Caco-2 (cell line): ENCODE measurements at regions of chr9 and their contacts with region 1.

Region 1: DNA sequence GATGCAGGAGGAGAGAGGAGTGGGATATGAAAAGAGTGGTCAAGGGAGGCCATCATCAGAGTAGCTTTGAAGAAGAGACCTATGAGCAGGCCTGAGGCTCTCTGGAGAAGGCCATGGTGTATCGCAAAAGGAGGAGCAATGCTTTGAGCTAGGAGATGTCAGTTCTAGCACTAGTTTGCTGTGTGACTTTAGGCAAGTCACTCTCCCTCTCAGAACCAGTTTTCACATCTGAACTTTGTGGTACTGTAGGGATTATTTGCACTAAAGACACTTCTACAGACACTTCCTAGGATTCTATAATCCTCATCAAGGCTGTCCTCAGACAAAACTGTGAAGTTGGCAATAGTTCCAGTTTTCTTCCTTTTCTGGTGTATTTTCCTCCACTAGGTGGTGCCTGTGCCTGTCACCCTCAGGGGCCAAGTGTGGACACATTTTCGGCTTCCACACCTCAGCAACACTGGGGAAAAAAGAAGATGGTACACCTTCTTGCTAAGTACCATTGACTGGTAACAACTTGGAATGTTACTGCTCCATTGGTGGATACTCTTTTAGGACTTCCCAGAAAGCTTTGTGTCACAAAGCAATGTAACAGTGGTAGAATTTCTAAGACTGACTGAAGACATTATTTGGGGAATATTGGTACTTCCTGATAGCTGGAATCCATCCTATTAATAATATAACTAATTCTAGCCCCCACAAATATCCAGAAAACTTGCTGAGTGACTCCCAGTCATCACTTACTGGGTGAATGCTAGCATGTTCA is 9.9 kb downstream of the PAPPA start:
- DNase-seq: peak in 1 of 2 experiments; percentile 17
- H3K4me3 ChIP-seq: no peak overlapping the region
- H3K4me3 Mint-ChIP-seq: no peak overlapping the region
- H3K27ac Mint-ChIP-seq: no peak overlapping the region
- H3K4me1 ChIP-seq: no peaks in the 10 kb centered on the region
- H3K4me1 Mint-ChIP-seq: no peaks in the 10 kb centered on the region
- H3K27me3 ChIP-seq: no peaks in the 10 kb centered on the region
- H3K27me3 Mint-ChIP-seq: peaks cover 16% of the 10 kb centered on the region
- CTCF ChIP-seq: peak; percentile 54 to 64

Region 2: GRCh38 chr9:115694014-115694413 is 469.5 kb before region 1 on chr9:
- CTCF ChIA-PET with region 1: no interaction called
- POLR2A ChIA-PET with region 1: no interaction called
- intact Hi-C with region 1: loop called (anchors 5 kb)
- DNase-seq: peak; percentile 36 to 38
- H3K4me3 ChIP-seq: no peak overlapping the region
- H3K4me3 Mint-ChIP-seq: no peak overlapping the region
- H3K27ac Mint-ChIP-seq: no peak overlapping the region
- H3K4me1 ChIP-seq: no peaks in the 10 kb centered on the region
- H3K4me1 Mint-ChIP-seq: no peaks in the 10 kb centered on the region
- H3K27me3 ChIP-seq: no peaks in the 10 kb centered on the region
- H3K27me3 Mint-ChIP-seq: peaks cover 13% of the 10 kb centered on the region
- CTCF ChIP-seq: no peak

Region 3: DNA sequence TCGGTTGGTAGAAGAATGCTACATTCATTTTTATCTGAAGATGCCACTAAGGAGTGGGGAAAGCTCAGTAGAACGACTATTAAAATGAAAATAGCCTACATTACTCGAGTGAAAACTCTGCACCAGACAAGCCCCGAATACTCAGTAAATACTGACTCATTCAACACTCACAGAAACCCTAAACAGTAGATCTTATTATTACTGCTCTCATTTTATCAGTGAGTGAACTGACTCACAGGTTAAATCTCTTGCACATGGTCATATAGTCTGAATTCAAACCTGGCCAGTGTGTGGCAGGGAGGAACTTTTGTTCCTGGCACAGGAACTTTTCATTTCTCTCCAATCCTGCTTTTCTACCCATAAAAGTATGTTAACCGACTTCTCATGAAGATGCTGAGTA is 19.4 kb before region 1 on chr9:
- CTCF ChIA-PET with region 1: no interaction called
- POLR2A ChIA-PET with region 1: no interaction called
- intact Hi-C with region 1: no loop called
- DNase-seq: no peak
- H3K4me3 ChIP-seq: no peak overlapping the region
- H3K4me3 Mint-ChIP-seq: no peak overlapping the region
- H3K27ac Mint-ChIP-seq: no peak overlapping the region
- H3K4me1 ChIP-seq: no peaks in the 10 kb centered on the region
- H3K4me1 Mint-ChIP-seq: no peaks in the 10 kb centered on the region
- H3K27me3 ChIP-seq: no peaks in the 10 kb centered on the region
- H3K27me3 Mint-ChIP-seq: peaks cover 18% of the 10 kb centered on the region
- CTCF ChIP-seq: no peak

Region 4: DNA sequence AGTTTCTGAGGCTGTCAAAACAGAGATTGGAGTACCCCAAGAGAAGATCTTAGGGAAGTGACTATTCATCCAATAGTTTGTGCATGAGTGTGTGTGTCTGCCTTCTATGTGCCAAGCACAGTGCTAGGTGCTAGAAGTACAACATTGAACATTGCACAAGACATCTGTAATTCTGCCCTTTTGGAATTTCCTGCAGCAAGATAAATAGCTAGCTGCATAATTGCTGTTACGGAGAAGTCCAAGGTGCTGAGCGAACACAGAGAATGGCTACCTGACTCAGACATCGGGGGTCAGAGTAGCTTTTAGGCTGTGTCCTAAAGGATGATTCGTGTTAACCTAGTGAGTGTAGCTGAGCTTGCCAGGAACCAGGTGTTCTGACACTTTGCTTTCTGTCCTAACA is 34.9 kb after region 1 on chr9:
- CTCF ChIA-PET with region 1: no interaction called
- POLR2A ChIA-PET with region 1: no interaction called
- intact Hi-C with region 1: no loop called
- DNase-seq: no peak
- H3K4me3 ChIP-seq: no peak overlapping the region
- H3K4me3 Mint-ChIP-seq: no peak overlapping the region
- H3K27ac Mint-ChIP-seq: no peak overlapping the region
- H3K4me1 ChIP-seq: no peaks in the 10 kb centered on the region
- H3K4me1 Mint-ChIP-seq: no peaks in the 10 kb centered on the region
- H3K27me3 ChIP-seq: no peaks in the 10 kb centered on the region; the same call in 1 of the 2 replicates
- H3K27me3 Mint-ChIP-seq: peaks cover 15% of the 10 kb centered on the region
- CTCF ChIP-seq: no peak

Region 5: GRCh38 chr9:116337015-116337414 is 173.5 kb after region 1 on chr9:
- CTCF ChIA-PET with region 1: no interaction called
- POLR2A ChIA-PET with region 1: no interaction called
- intact Hi-C with region 1: loop called (anchors 10 kb)
- DNase-seq: no peak
- H3K4me3 ChIP-seq: no peak overlapping the region
- H3K4me3 Mint-ChIP-seq: no peak overlapping the region
- H3K27ac Mint-ChIP-seq: no peak overlapping the region
- H3K4me1 ChIP-seq: no peaks in the 10 kb centered on the region
- H3K4me1 Mint-ChIP-seq: peaks cover 5% of the 10 kb centered on the region
- H3K27me3 ChIP-seq: no peaks in the 10 kb centered on the region
- H3K27me3 Mint-ChIP-seq: peaks cover 15% of the 10 kb centered on the region
- CTCF ChIP-seq: no peak